ENCODE measurements at regions of chr17 and their contacts with region 1.

Region 1: GRCh38 chr17:44636562-44636961 is 19.7 kb upstream of the MEIOC start:
- DNase-seq: peak; percentile 11

Region 2: GRCh38 chr17:44533533-44534246 is 102.9 kb before region 1 on chr17:
- in situ Hi-C with region 1: loop called (anchors 25 kb)
- DNase-seq: peak; percentile 65